ENCODE measurements at regions of chr4 and their contacts with region 1.

Region 1: GRCh38 chr4:87973283-87974169 is 2.0 kb upstream of the SPP1 start:
- DNase-seq: peak; percentile 58
- ATAC-seq: peak; percentile 71

Region 2: DNA sequence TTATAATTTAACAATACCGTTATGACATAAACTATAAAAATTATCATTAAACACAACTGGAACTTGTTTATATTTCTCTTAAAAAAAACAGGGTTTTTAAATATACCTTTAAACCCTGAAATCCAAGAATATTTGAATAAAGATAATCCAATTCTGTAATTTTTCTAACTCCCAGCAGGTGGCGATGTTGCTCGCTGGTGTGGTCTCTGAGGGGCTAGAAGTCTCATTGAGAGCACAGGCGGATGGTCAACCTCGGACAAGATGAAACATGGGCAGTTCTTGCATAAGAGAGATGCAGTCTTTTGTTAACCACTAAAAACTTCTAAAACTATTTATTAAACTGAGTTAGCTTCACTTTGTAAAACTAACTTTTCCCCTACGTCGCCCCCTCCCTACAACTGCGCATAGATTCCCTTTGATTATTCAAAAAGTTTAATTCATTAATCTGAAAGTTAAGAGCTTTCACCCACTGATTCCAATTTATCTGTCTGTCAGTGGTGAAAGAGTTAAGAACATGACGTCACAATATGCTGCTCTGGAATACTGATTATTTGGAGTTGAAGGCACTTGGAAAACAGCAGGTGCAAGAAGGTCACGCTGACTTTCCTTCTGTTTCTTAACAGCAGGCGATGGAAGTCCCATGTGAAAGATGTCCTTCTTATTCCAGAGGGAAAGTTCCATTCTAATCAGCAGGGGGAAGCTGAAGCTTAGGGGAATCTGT is 293.9 kb before region 1 on chr4:
- intact Hi-C with region 1: loop called (anchors 10 kb)
- DNase-seq: peak; percentile 48
- ATAC-seq: peak; percentile 90

Region 3: DNA sequence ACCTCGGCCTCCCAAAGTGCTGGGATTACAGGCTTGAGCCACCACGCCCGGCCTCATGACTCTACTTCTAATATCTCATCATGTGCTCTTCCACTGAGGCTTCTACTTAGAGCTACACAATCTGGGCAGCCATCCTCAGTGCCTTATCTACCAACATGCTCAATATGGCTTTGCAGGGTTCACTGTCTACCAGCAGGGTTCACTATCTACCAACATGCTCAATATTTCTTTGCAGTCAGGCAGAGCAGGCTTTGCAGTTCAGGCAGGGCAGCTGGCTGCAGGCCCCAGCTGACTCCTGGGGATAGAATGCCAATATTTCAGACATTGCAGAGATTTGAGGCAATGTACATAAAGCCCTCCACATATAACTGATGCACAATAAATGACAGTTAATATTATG is 81.4 kb after region 1 on chr4:
- intact Hi-C with region 1: no loop called
- DNase-seq: no peak
- ATAC-seq: peak; percentile 71